ENCODE measurements at regions of chr12 and their contacts with region 1.

Region 1: DNA sequence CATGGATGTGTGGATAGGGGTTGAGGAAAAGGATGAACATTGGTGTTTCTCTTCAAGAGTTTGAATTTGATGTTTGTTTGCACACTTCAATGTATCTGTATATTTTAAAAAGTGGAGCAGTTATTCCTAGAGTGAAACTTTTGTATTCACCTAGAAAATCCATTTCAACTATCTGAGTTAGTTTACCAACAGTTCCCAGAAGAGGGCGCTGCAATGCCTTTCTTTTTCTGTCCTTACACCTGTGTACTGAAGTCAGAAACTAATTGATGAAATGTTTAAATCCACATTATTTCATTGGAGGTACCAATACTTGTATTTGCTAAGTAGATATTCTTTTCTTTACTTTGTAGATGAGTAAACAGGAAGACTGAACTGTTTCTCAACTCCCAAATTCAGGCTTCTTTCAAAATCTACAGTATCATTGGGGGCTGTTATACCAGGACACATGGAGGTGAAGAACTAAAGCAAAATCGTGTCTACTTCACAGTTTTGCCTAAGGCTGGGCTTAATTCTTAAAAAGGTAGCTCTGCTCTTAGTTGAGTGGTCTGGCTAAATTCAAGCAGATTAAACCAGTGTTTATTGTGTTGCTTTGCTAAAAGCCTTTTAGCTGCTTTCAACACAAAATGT is 26.6 kb upstream of the KLRB1 start:
- DNase-seq: peak; percentile 59 to 87 (median 83)
- ATAC-seq: peak; percentile 95
- H3K4me3 ChIP-seq: no peak overlapping the region
- H3K4me3 Mint-ChIP-seq: peak overlapping the region; percentile 33
- H3K27ac ChIP-seq: peak overlapping the region in 1 of 2 experiments; percentile 23
- H3K27ac Mint-ChIP-seq: peak overlapping the region; percentile 92
- H3K4me1 ChIP-seq: peaks cover 43% of the 10 kb centered on the region
- H3K4me1 Mint-ChIP-seq: peaks cover 64% of the 10 kb centered on the region
- H3K27me3 ChIP-seq: no peaks in the 10 kb centered on the region
- H3K27me3 Mint-ChIP-seq: no peaks in the 10 kb centered on the region
- CTCF ChIP-seq: peak; percentile 93

Region 2: GRCh38 chr12:9331218-9331626 is 303.1 kb before region 1 on chr12:
- CTCF ChIA-PET with region 1: interaction called, 9 read pairs
- POLR2A ChIA-PET with region 1: no interaction called
- intact Hi-C with region 1: loop called in 1 of 2 experiments (anchors 2 kb)
- DNase-seq: peak; percentile 45 to 82 (median 71)
- ATAC-seq: peak; percentile 81
- H3K4me3 ChIP-seq: no peak overlapping the region
- H3K4me3 Mint-ChIP-seq: no peak overlapping the region
- H3K27ac ChIP-seq: no peak overlapping the region
- H3K27ac Mint-ChIP-seq: no peak overlapping the region
- H3K4me1 ChIP-seq: peaks cover 17% of the 10 kb centered on the region
- H3K4me1 Mint-ChIP-seq: peaks cover 23% of the 10 kb centered on the region
- H3K27me3 ChIP-seq: no peaks in the 10 kb centered on the region
- H3K27me3 Mint-ChIP-seq: no peaks in the 10 kb centered on the region
- CTCF ChIP-seq: peak; percentile 94

Region 3: GRCh38 chr12:9687228-9687627 is 52.9 kb after region 1 on chr12:
- CTCF ChIA-PET with region 1: interaction called, 12 read pairs
- POLR2A ChIA-PET with region 1: interaction called, 3 read pairs
- intact Hi-C with region 1: no loop called
- DNase-seq: peak in 2 of 9 experiments; percentile 50 to 68
- ATAC-seq: peak; percentile 61
- H3K4me3 ChIP-seq: no peak overlapping the region
- H3K4me3 Mint-ChIP-seq: no peak overlapping the region
- H3K27ac ChIP-seq: peak overlapping the region in 1 of 2 experiments; percentile 50
- H3K27ac Mint-ChIP-seq: peak overlapping the region; percentile 67
- H3K4me1 ChIP-seq: peaks cover 41% of the 10 kb centered on the region
- H3K4me1 Mint-ChIP-seq: peaks cover 76% of the 10 kb centered on the region
- H3K27me3 ChIP-seq: no peaks in the 10 kb centered on the region
- H3K27me3 Mint-ChIP-seq: no peaks in the 10 kb centered on the region
- CTCF ChIP-seq: no peak

Region 4: GRCh38 chr12:9741726-9742125 is 107.4 kb after region 1 on chr12:
- CTCF ChIA-PET with region 1: interaction called, 40 read pairs
- POLR2A ChIA-PET with region 1: no interaction called
- intact Hi-C with region 1: loop called in 1 of 2 experiments (anchors 1 kb)
- DNase-seq: peak; percentile 44 to 95 (median 67)
- ATAC-seq: peak; percentile 59
- H3K4me3 ChIP-seq: peak overlapping the region; percentile 13 to 19
- H3K4me3 Mint-ChIP-seq: peak overlapping the region; percentile 77
- H3K27ac ChIP-seq: peak overlapping the region; percentile 63 to 68
- H3K27ac Mint-ChIP-seq: peak overlapping the region; percentile 97
- H3K4me1 ChIP-seq: peaks cover 60% of the 10 kb centered on the region
- H3K4me1 Mint-ChIP-seq: peaks cover 67% of the 10 kb centered on the region
- H3K27me3 ChIP-seq: no peaks in the 10 kb centered on the region
- H3K27me3 Mint-ChIP-seq: no peaks in the 10 kb centered on the region
- CTCF ChIP-seq: no peak

Region 5: DNA sequence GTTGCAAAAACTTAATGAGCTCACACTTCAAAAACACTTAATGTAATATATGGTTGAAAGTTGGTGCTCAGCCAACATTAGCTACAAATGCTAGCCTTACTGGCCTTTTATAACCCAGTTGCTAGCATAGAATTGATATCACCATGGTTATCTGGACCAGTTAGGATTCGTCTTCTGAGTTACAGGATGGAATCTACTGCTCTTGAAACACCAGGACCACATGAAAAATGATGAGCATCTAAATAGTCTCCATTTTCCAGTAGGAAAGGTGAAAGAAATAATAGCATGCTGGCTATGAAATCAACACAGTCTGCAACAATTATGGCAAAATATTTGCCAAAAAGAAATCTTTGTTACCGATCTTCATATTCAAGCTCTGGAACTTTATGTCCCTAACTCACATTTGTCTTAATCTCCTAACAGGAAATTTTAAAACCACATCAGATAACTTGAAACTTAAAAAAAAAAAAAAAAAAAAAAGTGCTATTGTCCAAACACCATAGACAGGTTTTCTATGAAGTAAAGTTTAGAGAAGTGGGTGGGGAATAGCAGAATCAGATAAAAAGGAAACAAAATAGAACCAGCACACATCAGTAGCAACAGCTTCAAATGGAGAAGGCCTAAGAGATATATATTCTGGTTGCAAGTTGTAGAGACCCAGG is 139.1 kb after region 1 on chr12:
- CTCF ChIA-PET with region 1: no interaction called
- POLR2A ChIA-PET with region 1: no interaction called
- intact Hi-C with region 1: no loop called
- DNase-seq: peak in 1 of 9 experiments; percentile 60
- ATAC-seq: peak; percentile 71
- H3K4me3 ChIP-seq: no peak overlapping the region
- H3K4me3 Mint-ChIP-seq: peak overlapping the region; percentile 60
- H3K27ac ChIP-seq: peak overlapping the region in 1 of 2 experiments; percentile 3
- H3K27ac Mint-ChIP-seq: peak overlapping the region; percentile 70
- H3K4me1 ChIP-seq: peaks cover 39% of the 10 kb centered on the region
- H3K4me1 Mint-ChIP-seq: peaks cover 80% of the 10 kb centered on the region
- H3K27me3 ChIP-seq: no peaks in the 10 kb centered on the region
- H3K27me3 Mint-ChIP-seq: no peaks in the 10 kb centered on the region
- CTCF ChIP-seq: no peak

Region 6: DNA sequence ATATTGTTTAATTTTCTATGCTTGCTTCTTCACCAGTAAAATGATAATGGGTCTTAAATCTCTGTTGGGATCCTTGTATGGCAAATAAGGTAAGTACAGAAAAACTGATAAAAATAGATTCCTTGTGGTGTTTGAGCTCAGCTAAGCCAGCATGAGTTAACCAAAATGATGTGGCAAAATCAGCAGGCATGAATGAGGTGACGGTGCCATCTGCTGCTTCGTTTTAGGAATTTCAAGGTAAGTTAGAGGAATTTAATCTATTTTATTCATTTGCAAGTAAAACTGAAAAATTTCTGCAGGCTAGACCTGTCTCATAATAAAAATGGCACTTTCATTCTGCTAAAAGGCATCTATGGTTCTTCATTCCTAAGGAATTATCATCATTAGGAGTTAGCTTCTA is 505.7 kb after region 1 on chr12:
- CTCF ChIA-PET with region 1: no interaction called
- POLR2A ChIA-PET with region 1: no interaction called
- intact Hi-C with region 1: loop called in 1 of 2 experiments (anchors 5 kb)
- DNase-seq: peak in 6 of 9 experiments; percentile 9 to 69 (median 46)
- ATAC-seq: peak; percentile 51
- H3K4me3 ChIP-seq: no peak overlapping the region
- H3K4me3 Mint-ChIP-seq: no peak overlapping the region
- H3K27ac ChIP-seq: no peak overlapping the region
- H3K27ac Mint-ChIP-seq: no peak overlapping the region
- H3K4me1 ChIP-seq: no peaks in the 10 kb centered on the region
- H3K4me1 Mint-ChIP-seq: peaks cover 2% of the 10 kb centered on the region
- H3K27me3 ChIP-seq: peaks cover 0 to 4% of the 10 kb centered on the region in 2 experiments
- H3K27me3 Mint-ChIP-seq: peaks cover 6% of the 10 kb centered on the region
- CTCF ChIP-seq: peak; percentile 68